Activated B cell treated with CpG ODN at 0.5 μM for 24 hours (primary cell): ENCODE measurements at regions of chr16 and their contacts with region 1.

Region 1: GRCh38 chr16:48623304-48624016 is 13.5 kb upstream of the N4BP1 start:
- DNase-seq: peak; percentile 78
- ATAC-seq: peak; percentile 98
- H3K4me3 Mint-ChIP-seq: peak overlapping the region; percentile 82
- H3K27ac Mint-ChIP-seq: no peak overlapping the region
- H3K4me1 Mint-ChIP-seq: peaks cover 24% of the 10 kb centered on the region
- H3K27me3 Mint-ChIP-seq: peaks cover 3% of the 10 kb centered on the region
- CTCF ChIP-seq: peak; percentile 97

Region 2: DNA sequence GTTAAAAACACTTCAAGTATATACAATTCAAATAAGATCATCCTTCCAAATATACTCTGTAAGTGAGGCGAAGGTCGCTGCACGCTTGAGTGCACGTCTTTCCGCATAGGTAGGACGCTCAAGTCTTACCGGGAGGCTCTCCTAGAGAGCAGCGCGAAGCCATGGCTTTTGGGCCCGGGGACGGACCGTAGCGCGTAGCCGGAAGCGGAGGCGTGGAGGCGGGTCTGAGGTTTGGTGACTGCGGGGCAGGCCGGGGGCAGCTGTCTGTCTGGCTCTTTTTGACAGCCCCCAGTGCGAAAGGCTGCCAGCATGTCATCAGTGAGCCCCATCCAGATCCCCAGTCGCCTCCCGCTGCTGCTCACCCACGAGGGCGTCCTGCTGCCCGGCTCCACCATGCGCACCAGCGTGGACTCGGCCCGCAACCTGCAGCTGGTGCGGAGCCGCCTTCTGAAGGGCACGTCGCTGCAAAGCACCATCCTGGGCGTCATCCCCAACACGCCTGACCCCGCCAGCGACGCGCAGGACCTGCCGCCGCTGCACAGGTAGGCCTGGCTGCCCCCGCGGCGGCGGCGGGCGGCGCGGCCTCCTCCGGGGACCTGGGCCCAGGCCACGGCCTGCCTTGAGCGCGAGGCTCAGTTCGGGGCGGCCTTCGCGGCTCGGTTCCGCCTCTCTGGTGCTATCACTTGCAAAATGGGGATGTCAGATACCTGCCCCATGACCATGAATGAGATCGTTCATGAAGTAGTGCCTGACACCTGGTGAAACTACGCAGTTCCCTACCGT is 379.2 kb before region 1 on chr16 and contains the start of gene LONP2:
- CTCF ChIA-PET with region 1: no interaction called
- POLR2A ChIA-PET with region 1: no interaction called
- intact Hi-C with region 1: loop called (anchors 5 kb)
- DNase-seq: peak; percentile 86
- ATAC-seq: peak; percentile 97
- H3K4me3 Mint-ChIP-seq: peak within 1 kb of the TSS; percentile 91
- H3K27ac Mint-ChIP-seq: peak within 1 kb of the TSS; percentile 90
- H3K4me1 Mint-ChIP-seq: peaks cover 34% of the 10 kb centered on the region
- H3K27me3 Mint-ChIP-seq: no peaks in the 10 kb centered on the region
- CTCF ChIP-seq: no peak
- total RNA-seq, gene LONP2: 63.5 and 72.7 TPM in 2 replicates

Region 3: GRCh38 chr16:48353565-48354163 is 269.8 kb before region 1 on chr16:
- CTCF ChIA-PET with region 1: interaction called, 74 read pairs
- POLR2A ChIA-PET with region 1: interaction called, 23 read pairs
- intact Hi-C with region 1: loop called (anchors 1 kb)
- DNase-seq: no peak
- ATAC-seq: peak; percentile 93
- H3K4me3 Mint-ChIP-seq: no peak overlapping the region
- H3K27ac Mint-ChIP-seq: peak overlapping the region; percentile 5
- H3K4me1 Mint-ChIP-seq: peaks cover 28% of the 10 kb centered on the region
- H3K27me3 Mint-ChIP-seq: no peaks in the 10 kb centered on the region
- CTCF ChIP-seq: peak; percentile 53

Region 4: GRCh38 chr16:48459167-48459566 is 164.3 kb before region 1 on chr16:
- CTCF ChIA-PET with region 1: interaction called, 3 read pairs
- POLR2A ChIA-PET with region 1: interaction called, 4 read pairs
- intact Hi-C with region 1: loop called (anchors 5 kb)
- DNase-seq: no peak
- ATAC-seq: no peak
- H3K4me3 Mint-ChIP-seq: peak overlapping the region; percentile 1
- H3K27ac Mint-ChIP-seq: peak overlapping the region; percentile 69
- H3K4me1 Mint-ChIP-seq: peaks cover 64% of the 10 kb centered on the region
- H3K27me3 Mint-ChIP-seq: no peaks in the 10 kb centered on the region
- CTCF ChIP-seq: no peak

Region 5: DNA sequence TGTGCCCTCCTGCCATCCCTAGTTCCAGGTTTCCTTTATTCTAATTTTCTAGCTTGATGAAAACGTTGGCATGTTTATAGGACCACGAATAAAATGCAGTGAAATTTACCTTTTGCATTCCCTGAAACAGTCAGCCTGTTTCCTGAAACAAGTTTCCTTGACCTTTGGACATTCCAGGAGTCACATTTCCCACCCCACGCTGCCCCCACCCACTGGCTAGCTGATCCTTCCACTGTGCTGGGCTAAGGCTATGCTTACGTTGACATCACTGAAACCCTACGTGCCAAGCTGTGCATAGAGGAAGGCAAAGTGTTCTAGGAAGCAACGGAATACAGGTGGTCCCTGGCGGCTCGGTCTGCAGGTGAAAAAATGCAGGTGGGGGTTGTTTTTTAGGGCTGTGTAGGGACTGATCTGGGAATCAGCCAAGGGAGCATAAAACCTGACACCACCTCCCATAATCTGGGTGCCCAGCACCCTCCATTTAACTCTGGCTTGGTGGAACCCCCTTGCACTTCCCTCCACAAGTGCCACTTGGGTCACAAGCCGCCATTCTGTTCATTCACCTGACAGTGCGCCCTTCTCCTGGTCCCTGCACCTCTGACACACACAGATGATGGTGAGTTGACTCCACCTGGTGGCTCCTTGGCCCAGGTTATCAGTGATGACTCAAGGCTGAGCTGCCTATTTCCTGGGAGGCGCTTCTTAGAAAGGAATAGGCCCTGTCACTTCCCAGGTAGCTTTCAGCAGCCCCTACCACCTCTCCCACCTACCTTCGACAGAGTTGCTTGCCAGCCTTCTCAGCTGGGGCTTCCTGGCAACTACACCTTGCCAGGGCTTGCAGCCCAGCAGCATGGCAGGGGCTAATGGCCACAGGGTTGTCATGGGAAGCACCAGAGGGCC is 97.2 kb before region 1 on chr16:
- CTCF ChIA-PET with region 1: interaction called, 11 read pairs
- POLR2A ChIA-PET with region 1: no interaction called
- intact Hi-C with region 1: no loop called
- DNase-seq: no peak
- ATAC-seq: peak; percentile 83
- H3K4me3 Mint-ChIP-seq: no peak overlapping the region
- H3K27ac Mint-ChIP-seq: no peak overlapping the region
- H3K4me1 Mint-ChIP-seq: peaks cover 18% of the 10 kb centered on the region
- H3K27me3 Mint-ChIP-seq: no peaks in the 10 kb centered on the region
- CTCF ChIP-seq: no peak

Region 6: GRCh38 chr16:48542020-48542473 is 81.4 kb before region 1 on chr16:
- CTCF ChIA-PET with region 1: interaction called, 8 read pairs
- POLR2A ChIA-PET with region 1: no interaction called
- intact Hi-C with region 1: loop called (anchors 1 kb)
- DNase-seq: no peak
- ATAC-seq: peak; percentile 67
- H3K4me3 Mint-ChIP-seq: no peak overlapping the region
- H3K27ac Mint-ChIP-seq: no peak overlapping the region
- H3K4me1 Mint-ChIP-seq: peaks cover 8% of the 10 kb centered on the region
- H3K27me3 Mint-ChIP-seq: no peaks in the 10 kb centered on the region
- CTCF ChIP-seq: no peak